Posterior vena cava (tissue), 2 donors: ENCODE measurements at regions of chr6 and their contacts with region 1.

Region 1: GRCh38 chr6:71855406-71855805 is 30.9 kb upstream of the RIMS1 start:
- DNase-seq: no peak

Region 2: DNA sequence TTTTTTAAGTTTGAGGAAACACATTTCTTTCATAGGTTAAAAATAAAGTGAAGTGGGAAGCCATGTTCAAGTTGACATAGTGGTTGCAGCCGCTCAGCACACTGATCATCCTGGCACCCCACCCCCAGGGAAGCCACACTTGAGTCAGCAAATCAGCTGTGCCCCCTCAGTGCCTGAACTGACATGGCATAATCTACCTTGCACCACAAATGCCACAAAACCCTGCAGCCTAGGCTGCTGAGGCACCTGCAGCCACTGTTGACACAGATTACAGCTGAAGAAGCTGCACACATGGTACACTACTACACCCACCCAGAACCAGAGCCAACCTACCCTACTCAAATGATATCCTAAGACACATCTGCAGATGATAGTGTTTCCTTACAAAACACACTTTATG is 46.5 kb before region 1 on chr6:
- intact Hi-C with region 1: loop called in 1 of 2 experiments (anchors 2 kb)
- DNase-seq: no peak